ENCODE measurements at regions of chr5 and their contacts with region 1.

Region 1: DNA sequence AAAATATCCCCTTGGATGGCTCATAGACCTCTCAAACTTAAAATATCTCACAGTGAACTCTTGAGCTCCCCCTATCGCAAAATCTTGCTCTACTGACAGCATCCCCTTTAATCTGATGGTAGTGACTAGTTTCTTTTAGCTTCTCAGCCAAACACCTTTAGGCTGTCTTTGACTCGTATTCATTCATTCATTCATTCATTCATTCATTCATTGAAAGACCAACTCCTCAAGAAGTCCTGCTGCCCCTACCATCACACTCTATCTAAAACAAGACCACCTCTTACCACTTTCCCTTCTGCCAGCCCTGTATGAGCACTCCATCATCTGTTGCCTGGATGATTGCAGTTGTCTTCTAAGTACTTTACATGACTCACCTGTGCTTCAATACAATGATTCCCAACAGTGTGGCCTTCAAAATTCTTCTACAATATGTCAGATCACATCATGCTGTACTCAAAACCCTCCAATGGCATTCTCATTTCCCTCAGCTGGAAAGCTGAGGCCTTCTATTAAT is 46.8 kb downstream of the ITGA2 start:
- DNase-seq: peak; percentile 28
- H3K4me3 ChIP-seq: no peak overlapping the region
- H3K27ac ChIP-seq: no peak overlapping the region
- H3K4me1 ChIP-seq: peaks cover 52% of the 10 kb centered on the region
- H3K27me3 ChIP-seq: no peaks in the 10 kb centered on the region
- CTCF ChIP-seq: peak; percentile 20 to 31
- POLR2A ChIP-seq: no peak

Region 2: DNA sequence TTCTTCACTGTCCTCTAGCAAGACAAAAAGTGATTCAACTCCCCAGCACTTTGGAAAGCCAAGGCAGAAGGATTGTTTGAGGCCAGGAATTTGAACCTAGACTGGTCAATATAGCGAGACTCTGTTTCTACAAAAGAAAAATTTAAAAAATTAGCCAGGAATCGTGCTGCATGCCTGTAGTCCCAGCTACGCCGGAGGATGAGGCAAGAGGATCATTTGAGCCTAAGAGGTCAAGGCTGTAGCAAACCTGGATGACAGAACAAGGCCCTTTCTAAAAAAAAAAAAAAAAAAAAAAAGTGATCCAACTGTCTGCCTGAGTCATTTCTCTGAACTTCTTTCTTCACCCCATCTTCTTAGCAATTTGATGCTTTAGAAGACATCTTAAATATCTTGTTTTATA is 34.4 kb before region 1 on chr5:
- CTCF ChIA-PET with region 1: interaction called, 10 read pairs
- POLR2A ChIA-PET with region 1: no interaction called
- dilution Hi-C with region 1: no loop called
- intact Hi-C with region 1: loop called (anchors 2 kb)
- DNase-seq: no peak
- H3K4me3 ChIP-seq: no peak overlapping the region
- H3K27ac ChIP-seq: no peak overlapping the region
- H3K4me1 ChIP-seq: peaks cover 53% of the 10 kb centered on the region
- H3K27me3 ChIP-seq: no peaks in the 10 kb centered on the region
- CTCF ChIP-seq: no peak
- POLR2A ChIP-seq: no peak

Region 3: GRCh38 chr5:53008751-53009150 is 27.2 kb before region 1 on chr5:
- CTCF ChIA-PET with region 1: interaction called, 5 read pairs
- POLR2A ChIA-PET with region 1: no interaction called
- dilution Hi-C with region 1: no loop called
- intact Hi-C with region 1: loop called (anchors 2 kb)
- DNase-seq: peak; percentile 43
- H3K4me3 ChIP-seq: no peak overlapping the region
- H3K27ac ChIP-seq: peak overlapping the region; percentile 38
- H3K4me1 ChIP-seq: peaks cover 53% of the 10 kb centered on the region
- H3K27me3 ChIP-seq: no peaks in the 10 kb centered on the region
- CTCF ChIP-seq: no peak
- POLR2A ChIP-seq: peak; percentile 13

Region 4: DNA sequence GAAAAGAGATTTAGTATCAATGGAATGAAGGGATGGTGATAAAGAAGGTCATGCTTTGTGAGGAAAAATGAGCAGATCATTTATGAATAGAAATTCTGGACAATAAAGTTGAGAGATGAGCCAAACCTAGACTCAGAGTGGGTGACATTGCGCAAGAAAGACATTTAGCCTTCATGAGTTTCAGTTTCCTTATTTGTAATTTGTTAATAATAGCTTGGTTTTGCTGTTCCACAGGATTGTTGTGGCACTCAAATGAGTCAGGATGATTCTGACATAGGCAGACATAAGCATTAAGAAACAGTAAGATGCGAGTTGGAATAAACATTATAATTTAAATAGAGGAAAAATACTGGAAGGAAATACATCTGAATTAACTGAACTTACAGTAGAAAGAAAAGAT is 12.0 kb before region 1 on chr5:
- CTCF ChIA-PET with region 1: interaction called, 27 read pairs
- POLR2A ChIA-PET with region 1: interaction called, 3 read pairs
- dilution Hi-C with region 1: no loop called
- intact Hi-C with region 1: no loop called
- DNase-seq: peak; percentile 52
- H3K4me3 ChIP-seq: no peak overlapping the region
- H3K27ac ChIP-seq: no peak overlapping the region
- H3K4me1 ChIP-seq: peaks cover 35% of the 10 kb centered on the region
- H3K27me3 ChIP-seq: no peaks in the 10 kb centered on the region
- CTCF ChIP-seq: no peak
- POLR2A ChIP-seq: no peak

Region 5: GRCh38 chr5:53063176-53063575 is 27.3 kb after region 1 on chr5:
- CTCF ChIA-PET with region 1: interaction called, 8 read pairs
- POLR2A ChIA-PET with region 1: no interaction called
- dilution Hi-C with region 1: no loop called
- intact Hi-C with region 1: loop called (anchors 2 kb)
- DNase-seq: peak; percentile 88
- H3K4me3 ChIP-seq: peak overlapping the region in 1 of 3 experiments; percentile 21
- H3K27ac ChIP-seq: peak overlapping the region; percentile 71
- H3K4me1 ChIP-seq: peaks cover 26% of the 10 kb centered on the region
- H3K27me3 ChIP-seq: no peaks in the 10 kb centered on the region
- CTCF ChIP-seq: no peak
- POLR2A ChIP-seq: no peak